GM10248 (cell line): ENCODE measurements at regions of chr3 and their contacts with region 1.

Region 1: DNA sequence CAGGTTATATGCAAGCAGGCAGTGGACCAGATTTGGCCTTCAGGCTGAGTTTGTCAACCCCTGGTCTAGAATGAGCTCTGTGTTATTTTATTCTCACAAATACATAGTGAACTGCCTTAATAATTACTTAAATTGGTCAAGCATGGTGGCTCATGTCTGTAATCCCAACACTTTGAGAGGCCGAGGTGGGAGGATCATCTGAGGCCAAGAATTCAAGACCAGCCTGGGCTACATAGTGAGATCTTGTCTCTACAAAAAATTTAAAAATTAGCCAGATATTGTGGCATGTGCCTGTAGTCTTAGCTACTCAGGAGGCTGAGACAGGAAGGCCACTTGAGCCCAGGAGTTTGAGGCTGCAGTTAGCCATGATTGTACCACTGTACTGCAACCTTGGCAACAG is 15.0 kb downstream of the PLS1 start:
- DNase-seq: no peak
- CTCF ChIP-seq: no peak

Region 2: GRCh38 chr3:142211035-142211434 is 400.2 kb before region 1 on chr3:
- CTCF ChIA-PET with region 1: no interaction called
- POLR2A ChIA-PET with region 1: no interaction called
- DNase-seq: no peak
- CTCF ChIP-seq: peak; percentile 39

Region 3: DNA sequence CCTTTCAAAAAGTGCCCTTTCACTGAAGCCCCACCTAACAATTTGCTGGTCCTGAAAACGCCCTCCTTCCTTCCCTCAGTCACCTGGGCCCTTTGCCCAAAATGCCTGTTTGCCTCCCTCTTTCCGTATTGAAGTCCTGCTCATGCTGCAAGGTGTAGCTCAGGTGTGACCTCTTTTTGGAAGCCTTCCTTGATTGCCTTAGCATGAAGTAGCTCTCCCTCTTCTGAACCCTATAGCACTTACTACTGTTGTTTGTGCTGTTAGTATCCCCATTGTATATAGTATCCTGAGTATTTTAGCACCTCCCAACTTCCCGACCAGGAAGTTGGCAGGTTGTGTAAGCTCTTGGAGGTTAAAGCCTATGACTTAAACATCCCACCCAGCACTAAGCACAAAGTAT is 13.3 kb before region 1 on chr3:
- CTCF ChIA-PET with region 1: interaction called, 11 read pairs
- POLR2A ChIA-PET with region 1: no interaction called
- DNase-seq: no peak
- CTCF ChIP-seq: no peak

Region 4: GRCh38 chr3:143158014-143158988 is 547.1 kb after region 1 on chr3:
- CTCF ChIA-PET with region 1: no interaction called
- POLR2A ChIA-PET with region 1: no interaction called
- DNase-seq: peak; percentile 47
- CTCF ChIP-seq: no peak